Dorsolateral prefrontal cortex (tissue), 120 donors: ENCODE measurements at regions of chr19 and their contacts with region 1.

Region 1: GRCh38 chr19:17419621-17420466 is at the start of gene MVB12A:
- DNase-seq: peak; percentile 97 to 99 (median 98)
- H3K4me3 ChIP-seq: peak within 1 kb of the TSS; percentile 59 to 98 (median 85)
- H3K27ac ChIP-seq: peak within 1 kb of the TSS in 58 of 59 donors; percentile 29 to 93 (median 85)
- H3K27me3 ChIP-seq: peaks cover 0 to 3% (median 0%) of the 10 kb centered on the region in 45 donors
- CTCF ChIP-seq: peak in 42 of 56 donors; percentile 4 to 63 (median 31)
- total RNA-seq, gene MVB12A: 11.0 to 32.6 (median 19.8) TPM

Region 2: DNA sequence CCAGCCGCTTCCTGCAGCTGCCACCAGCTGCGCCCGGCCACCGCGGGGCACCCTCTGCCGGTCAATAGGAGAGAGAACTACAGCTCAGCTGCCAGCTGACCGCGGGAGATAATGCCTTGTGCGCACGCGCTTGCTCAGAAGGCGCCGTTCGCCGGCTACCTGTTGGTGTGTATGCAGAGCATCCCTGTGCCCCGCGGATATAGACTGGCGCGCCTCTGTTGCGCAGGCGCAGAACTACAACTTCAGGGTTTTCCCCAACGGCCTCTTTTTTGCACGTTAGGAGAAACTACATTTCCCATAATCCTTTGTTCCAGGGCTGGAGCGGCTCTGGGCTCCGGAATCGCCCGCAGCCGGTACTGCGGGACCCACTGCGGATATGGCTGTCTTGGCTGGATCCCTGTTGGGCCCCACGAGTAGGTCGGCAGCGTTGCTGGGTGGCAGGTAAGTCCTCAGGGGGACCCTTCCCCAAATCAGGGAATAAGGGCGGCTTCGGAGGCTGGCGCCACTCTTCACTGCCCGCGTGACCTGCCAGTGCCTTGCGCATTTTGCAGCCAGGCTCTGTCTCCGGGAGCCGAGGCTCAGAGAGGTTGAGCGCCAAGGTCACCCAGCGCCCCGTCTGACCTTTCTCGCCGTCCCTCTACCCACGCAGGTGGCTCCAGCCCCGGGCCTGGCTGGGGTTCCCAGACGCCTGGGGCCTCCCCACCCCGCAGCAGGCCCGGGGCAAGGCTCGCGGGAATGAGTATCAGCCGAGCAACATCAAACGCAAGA is 114.1 kb before region 1 on chr19 and contains the start of gene MRPL34:
- intact Hi-C with region 1: loop called in 1 of 2 experiments (anchors 2 kb)
- DNase-seq: peak in 9 of 10 donors; percentile 92 to 98 (median 97)
- H3K4me3 ChIP-seq: peak within 1 kb of the TSS; percentile 53 to 100 (median 82)
- H3K27ac ChIP-seq: peak within 1 kb of the TSS; percentile 75 to 99 (median 95)
- H3K27me3 ChIP-seq: no peaks in the 10 kb centered on the region
- CTCF ChIP-seq: peak; percentile 37 to 90 (median 78)
- total RNA-seq, gene MRPL34: 41.6 to 99.8 (median 67.2) TPM

Region 3: DNA sequence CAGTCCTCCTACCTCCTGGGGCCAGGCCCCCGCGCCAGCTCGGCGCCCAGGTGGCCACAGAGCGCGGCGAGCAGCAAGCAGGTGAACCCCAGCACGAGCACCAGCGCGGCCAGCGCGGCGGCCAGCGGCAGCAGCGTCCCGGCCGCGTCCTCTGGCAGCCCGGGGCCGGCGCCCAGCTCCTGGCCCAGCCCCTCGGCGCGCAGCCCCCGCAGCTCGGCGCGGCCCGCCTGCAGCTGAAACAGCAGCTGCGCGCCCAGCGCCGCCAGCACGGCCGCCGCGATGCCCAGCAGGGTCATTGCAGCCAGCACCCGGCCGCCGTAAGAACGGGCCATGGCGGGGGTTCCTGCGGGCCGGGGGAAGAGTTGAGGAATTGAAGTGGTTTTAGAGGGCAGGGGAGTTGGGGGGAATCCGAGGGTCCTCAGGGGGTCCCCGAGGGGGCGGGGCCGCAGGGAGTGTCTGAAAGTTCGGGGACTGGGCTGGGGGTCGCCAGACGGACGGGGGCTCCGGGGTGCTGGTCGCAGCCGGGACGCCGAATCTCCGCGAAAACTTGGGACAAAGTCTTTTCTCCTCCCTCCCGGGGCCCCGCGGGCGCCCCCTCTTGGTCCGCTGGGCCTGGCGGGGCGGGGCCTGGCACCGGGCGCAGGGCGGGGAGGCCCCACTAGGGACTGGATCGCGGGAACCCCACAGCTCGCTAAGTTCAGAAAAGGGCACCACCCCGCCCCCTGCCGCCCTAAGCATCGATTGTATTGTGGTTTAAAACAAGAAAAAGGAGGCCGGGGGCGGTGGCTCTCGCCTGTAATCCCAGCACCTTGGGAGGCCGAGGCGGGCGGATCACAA is 28.5 kb after region 1 on chr19 and contains the start of gene TMEM221:
- intact Hi-C with region 1: no loop called
- DNase-seq: peak in 1 of 10 donors; percentile 56
- H3K4me3 ChIP-seq: peak within 1 kb of the TSS; percentile 23 to 67 (median 49)
- H3K27ac ChIP-seq: peak within 1 kb of the TSS in 8 of 59 donors; percentile 16 to 55 (median 36)
- H3K27me3 ChIP-seq: no peaks in the 10 kb centered on the region
- CTCF ChIP-seq: peak in 54 of 56 donors; percentile 15 to 66 (median 46)
- total RNA-seq, gene TMEM221: 1.2 to 7.2 (median 4.1) TPM

Region 4: GRCh38 chr19:17932485-17933338 is 512.9 kb after region 1 on chr19 and contains the start of gene CCDC124:
- intact Hi-C with region 1: loop called in 1 of 2 experiments (anchors 10 kb)
- DNase-seq: peak; percentile 79 to 89 (median 84)
- H3K4me3 ChIP-seq: peak within 1 kb of the TSS; percentile 63 to 100 (median 93)
- H3K27ac ChIP-seq: peak within 1 kb of the TSS; percentile 88 to 100 (median 96)
- H3K27me3 ChIP-seq: no peaks in the 10 kb centered on the region
- CTCF ChIP-seq: peak; percentile 55 to 93 (median 80)
- total RNA-seq, gene CCDC124: 46.6 to 103 (median 70.3) TPM